Activated CD4-positive, alpha-beta T cell treated with anti-CD3 and anti-CD28 coated beads, Interleukin-2, amount 10 ng/mL, durations not matched to agents 7 days and 5 days (primary cell): ENCODE measurements at regions of chr13 and their contacts with region 1.

Region 1: GRCh38 chr13:95191821-95192563 is 109.3 kb downstream of the ABCC4 start:
- DNase-seq: peak; percentile 64
- H3K4me3 Mint-ChIP-seq: no peak overlapping the region
- H3K27ac Mint-ChIP-seq: no peak overlapping the region
- H3K4me1 Mint-ChIP-seq: peaks cover 12% of the 10 kb centered on the region
- H3K27me3 Mint-ChIP-seq: no peaks in the 10 kb centered on the region

Region 2: DNA sequence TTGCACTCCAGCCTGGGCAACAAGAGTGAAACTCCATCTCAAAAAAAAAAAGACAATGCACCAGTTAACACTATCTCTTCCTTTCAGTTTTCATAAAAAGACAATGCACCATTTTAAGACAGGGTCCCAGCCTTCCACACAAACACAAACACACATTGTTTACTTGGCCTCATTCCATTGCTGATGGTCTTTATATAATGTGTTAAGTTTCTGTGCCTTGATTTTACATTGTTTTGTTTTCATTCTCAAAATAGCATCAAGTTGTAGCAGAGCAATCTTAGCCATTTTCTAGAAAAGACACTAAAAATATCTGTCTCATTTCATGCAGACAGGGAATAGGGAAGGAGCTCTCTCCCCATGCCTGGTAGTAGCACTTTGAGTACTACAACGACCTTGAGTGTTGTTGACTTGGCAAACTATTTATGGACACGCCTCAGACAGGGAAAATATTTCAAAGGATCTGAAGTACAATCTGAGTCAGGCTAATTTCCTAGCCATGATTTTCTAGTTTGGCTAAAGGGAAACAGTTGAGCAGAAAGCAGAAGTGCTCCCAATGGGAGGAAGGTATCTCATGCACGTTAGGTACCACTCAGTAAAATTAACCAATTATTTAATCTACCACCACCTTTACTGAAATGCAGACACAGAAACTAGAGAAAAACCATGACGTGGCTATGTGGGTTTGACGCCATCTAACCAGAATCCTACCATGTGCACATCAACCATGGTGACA is 11.3 kb before region 1 on chr13:
- CTCF ChIA-PET with region 1: interaction called, 12 read pairs
- POLR2A ChIA-PET with region 1: no interaction called
- DNase-seq: no peak
- H3K4me3 Mint-ChIP-seq: no peak overlapping the region
- H3K27ac Mint-ChIP-seq: no peak overlapping the region
- H3K4me1 Mint-ChIP-seq: peaks cover 66% of the 10 kb centered on the region
- H3K27me3 Mint-ChIP-seq: no peaks in the 10 kb centered on the region

Region 3: GRCh38 chr13:95378603-95379002 is 186.6 kb after region 1 on chr13:
- CTCF ChIA-PET with region 1: interaction called, 20 read pairs
- POLR2A ChIA-PET with region 1: no interaction called
- DNase-seq: no peak
- H3K4me3 Mint-ChIP-seq: no peak overlapping the region
- H3K27ac Mint-ChIP-seq: no peak overlapping the region
- H3K4me1 Mint-ChIP-seq: peaks cover 6% of the 10 kb centered on the region
- H3K27me3 Mint-ChIP-seq: peaks cover 3% of the 10 kb centered on the region

Region 4: GRCh38 chr13:95438297-95438696 is 246.3 kb after region 1 on chr13:
- CTCF ChIA-PET with region 1: no interaction called
- POLR2A ChIA-PET with region 1: no interaction called
- DNase-seq: no peak
- H3K4me3 Mint-ChIP-seq: no peak overlapping the region
- H3K27ac Mint-ChIP-seq: no peak overlapping the region
- H3K4me1 Mint-ChIP-seq: no peaks in the 10 kb centered on the region
- H3K27me3 Mint-ChIP-seq: no peaks in the 10 kb centered on the region